ENCODE measurements at regions of chr5 and their contacts with region 1.

Region 1: DNA sequence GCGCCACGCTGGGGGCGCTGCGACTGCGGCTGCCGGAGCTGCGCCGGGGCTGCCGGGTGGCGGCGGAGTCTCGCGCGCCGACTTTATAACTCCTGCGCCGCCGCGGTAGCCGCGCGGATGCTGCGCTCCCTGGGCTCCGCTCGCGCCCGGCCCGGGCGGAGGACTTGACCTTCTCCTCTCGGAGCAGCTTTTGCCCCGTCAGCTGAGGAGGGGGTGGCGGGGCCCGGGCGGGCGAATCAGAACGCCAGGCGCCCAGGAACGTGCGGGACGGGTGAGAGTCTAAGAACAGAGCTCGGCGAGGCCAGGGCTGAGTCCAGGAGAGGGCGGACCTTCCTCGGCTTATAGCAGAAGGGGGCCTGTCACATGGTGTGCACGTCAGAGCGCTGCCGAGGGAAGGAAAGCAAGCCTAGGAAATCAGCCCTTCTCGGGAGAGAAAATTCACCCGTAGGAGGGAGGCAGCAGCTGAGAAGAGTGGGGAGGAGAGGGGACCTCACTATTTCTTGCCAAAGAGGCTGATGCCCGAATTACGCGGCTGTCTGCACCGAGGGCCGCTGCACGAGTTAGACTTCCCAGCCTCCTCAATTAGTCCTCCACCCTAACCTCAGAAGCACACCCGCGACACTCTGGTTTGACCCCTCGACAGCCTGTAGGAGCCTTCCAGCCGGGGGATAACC is at the start of gene FOXD1:
- DNase-seq: no peak
- total RNA-seq, gene FOXD1: 0.54 TPM

Region 2: DNA sequence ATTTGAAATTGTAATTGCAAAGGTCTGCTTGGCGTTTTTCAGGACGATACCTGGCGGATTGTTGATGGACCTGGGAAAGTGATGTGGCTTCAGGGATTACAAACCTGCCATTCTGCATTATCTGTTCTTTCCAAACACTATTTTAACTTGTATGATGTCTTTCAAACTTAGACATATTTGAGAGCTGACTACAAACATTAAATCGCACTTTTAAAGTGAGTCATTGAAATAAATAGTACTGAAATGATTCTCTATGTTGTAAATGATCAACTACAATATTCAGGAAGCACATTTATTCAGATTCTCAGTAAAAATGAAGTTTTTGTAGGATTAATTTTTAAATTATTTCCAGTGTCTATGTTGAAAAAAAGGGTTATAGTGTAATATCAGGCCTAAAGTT is 360.6 kb before region 1 on chr5:
- intact Hi-C with region 1: loop called (anchors 2 kb)
- DNase-seq: no peak

Region 3: DNA sequence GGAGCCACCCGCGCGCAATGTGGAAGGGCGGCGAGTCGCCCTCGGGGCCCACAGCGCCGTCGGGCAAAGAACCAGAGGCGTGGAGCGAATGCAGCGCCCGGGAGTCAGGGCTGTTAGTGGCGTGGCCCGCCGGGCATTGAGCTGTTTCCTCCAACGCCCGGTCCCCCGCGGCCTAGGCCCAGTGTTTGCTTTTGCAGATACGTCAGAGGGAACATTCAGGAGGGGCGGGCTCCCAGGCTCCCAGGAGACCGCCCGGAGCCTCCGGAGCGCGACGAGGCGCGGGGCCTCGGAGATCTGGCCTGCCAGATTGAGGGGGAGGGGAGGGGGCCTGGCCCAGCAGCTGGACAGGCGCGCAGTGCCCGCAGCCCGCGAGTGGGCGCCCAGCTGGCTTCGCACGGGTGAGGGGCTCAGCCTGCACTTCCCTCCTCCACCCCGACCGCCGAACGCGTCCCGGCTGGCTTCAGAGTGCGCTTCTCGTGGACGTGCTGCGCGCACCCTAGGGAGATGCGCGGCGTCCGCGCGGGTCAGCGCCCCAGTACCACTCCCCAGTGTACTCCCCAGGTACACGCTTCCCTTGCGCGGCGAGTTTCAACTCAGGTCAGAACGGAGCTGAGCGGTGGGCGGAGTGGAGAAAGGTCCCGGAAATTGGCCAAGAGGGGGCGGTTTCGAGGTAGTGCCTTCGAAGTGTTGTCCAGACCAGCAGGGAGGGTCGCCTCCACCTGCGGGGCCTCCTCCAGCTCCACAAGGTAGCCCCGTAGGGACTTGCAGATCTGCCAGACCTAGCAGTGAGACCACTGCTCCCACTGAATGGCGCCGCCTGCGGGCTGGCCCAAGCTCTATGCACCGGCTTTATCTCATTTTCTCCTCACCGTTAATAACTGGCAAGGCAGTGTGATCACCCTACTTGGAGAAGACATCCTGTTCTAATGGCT is 145.2 kb before region 1 on chr5:
- intact Hi-C with region 1: loop called (anchors 5 kb)
- DNase-seq: no peak

Region 4: GRCh38 chr5:73482383-73483136 is 34.0 kb after region 1 on chr5:
- intact Hi-C with region 1: no loop called
- DNase-seq: no peak

Region 5: DNA sequence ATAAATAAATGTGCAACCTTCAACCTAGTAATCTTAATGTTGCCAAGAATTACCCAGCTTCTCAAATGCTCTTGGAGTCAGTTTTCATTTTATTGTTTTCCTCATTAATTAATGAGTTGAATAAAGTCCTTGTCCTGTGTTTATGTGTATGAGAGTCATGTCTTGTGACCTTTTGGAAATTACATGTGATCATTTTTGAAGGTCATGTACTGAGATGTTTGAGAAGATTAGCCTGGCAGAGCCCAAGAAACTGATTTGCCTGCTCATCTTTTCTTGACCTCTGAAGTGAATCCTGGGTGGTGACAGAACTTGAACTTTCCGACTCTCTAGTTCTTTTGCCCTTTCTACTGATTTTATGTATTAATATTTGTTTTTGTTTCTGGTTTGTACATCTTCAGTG is 101.4 kb after region 1 on chr5:
- intact Hi-C with region 1: no loop called
- DNase-seq: no peak

Region 6: DNA sequence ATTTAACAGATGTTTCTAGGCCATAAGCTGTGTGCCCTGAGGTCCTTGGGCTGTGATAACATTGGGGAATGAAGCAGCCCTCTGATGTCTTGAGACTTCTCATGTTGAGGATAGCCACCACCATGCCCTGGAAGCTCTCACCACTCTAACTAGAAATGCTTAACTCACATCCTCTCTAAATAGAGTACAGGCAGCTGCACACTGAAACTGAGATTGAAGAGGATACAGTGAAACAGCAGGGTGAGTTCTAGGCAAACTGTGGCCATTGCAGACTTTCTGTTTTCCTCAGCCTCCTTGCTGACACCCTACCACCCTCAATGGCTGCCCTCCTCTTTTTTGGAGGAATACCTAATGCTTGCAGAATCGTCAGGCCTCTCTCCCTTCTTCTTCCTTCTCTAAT is 139.3 kb after region 1 on chr5:
- intact Hi-C with region 1: no loop called
- DNase-seq: no peak

Region 7: GRCh38 chr5:73911761-73912393 is 463.3 kb after region 1 on chr5:
- intact Hi-C with region 1: no loop called
- DNase-seq: no peak